B cell (primary cell): ENCODE measurements at regions of chr6 and their contacts with region 1.

Region 1: GRCh38 chr6:36678518-36679027 is at the start of gene CDKN1A:
- DNase-seq: peak; percentile 92
- ATAC-seq: peak; percentile 51
- H3K4me3 ChIP-seq: peak within 1 kb of the TSS; percentile 55 to 98 (median 71)
- H3K4me3 Mint-ChIP-seq: peak within 1 kb of the TSS; percentile 99
- H3K27ac ChIP-seq: peak within 1 kb of the TSS; percentile 97 to 100
- H3K27ac Mint-ChIP-seq: peak within 1 kb of the TSS; percentile 88
- H3K4me1 ChIP-seq: peaks cover 33 to 48% of the 10 kb centered on the region in 2 donors
- H3K4me1 Mint-ChIP-seq: peaks cover 41% of the 10 kb centered on the region
- H3K27me3 ChIP-seq: no peaks in the 10 kb centered on the region
- H3K27me3 Mint-ChIP-seq: no peaks in the 10 kb centered on the region
- CTCF ChIP-seq: no peak
- total RNA-seq, gene CDKN1A: 45.5 and 47.2 TPM in 2 replicates

Region 2: GRCh38 chr6:36196880-36197548 is 481.6 kb before region 1 on chr6:
- CTCF ChIA-PET with region 1: no interaction called
- POLR2A ChIA-PET with region 1: no interaction called
- intact Hi-C with region 1: loop called (anchors 5 kb)
- DNase-seq: peak; percentile 98
- ATAC-seq: peak; percentile 90
- H3K4me3 ChIP-seq: peak overlapping the region; percentile 17 to 84 (median 62)
- H3K4me3 Mint-ChIP-seq: peak overlapping the region; percentile 94
- H3K27ac ChIP-seq: peak overlapping the region; percentile 78 to 79
- H3K27ac Mint-ChIP-seq: peak overlapping the region; percentile 96
- H3K4me1 ChIP-seq: peaks cover 21 to 22% of the 10 kb centered on the region in 2 donors
- H3K4me1 Mint-ChIP-seq: peaks cover 36% of the 10 kb centered on the region
- H3K27me3 ChIP-seq: no peaks in the 10 kb centered on the region
- H3K27me3 Mint-ChIP-seq: no peaks in the 10 kb centered on the region
- CTCF ChIP-seq: no peak

Region 3: GRCh38 chr6:36546920-36547645 is 131.5 kb before region 1 on chr6 and contains the start of gene STK38:
- CTCF ChIA-PET with region 1: no interaction called
- POLR2A ChIA-PET with region 1: interaction called, 6 read pairs
- intact Hi-C with region 1: loop called (anchors 2 kb)
- DNase-seq: peak; percentile 95
- ATAC-seq: peak; percentile 85
- H3K4me3 ChIP-seq: peak within 1 kb of the TSS; percentile 70 to 96 (median 88)
- H3K4me3 Mint-ChIP-seq: peak within 1 kb of the TSS; percentile 94
- H3K27ac ChIP-seq: peak within 1 kb of the TSS; percentile 87 to 92
- H3K27ac Mint-ChIP-seq: peak within 1 kb of the TSS; percentile 91
- H3K4me1 ChIP-seq: peaks cover 52 to 60% of the 10 kb centered on the region in 2 donors
- H3K4me1 Mint-ChIP-seq: peaks cover 59% of the 10 kb centered on the region
- H3K27me3 ChIP-seq: no peaks in the 10 kb centered on the region
- H3K27me3 Mint-ChIP-seq: no peaks in the 10 kb centered on the region
- CTCF ChIP-seq: no peak
- total RNA-seq, gene STK38: 67.4 and 71.8 TPM in 2 replicates

Region 4: DNA sequence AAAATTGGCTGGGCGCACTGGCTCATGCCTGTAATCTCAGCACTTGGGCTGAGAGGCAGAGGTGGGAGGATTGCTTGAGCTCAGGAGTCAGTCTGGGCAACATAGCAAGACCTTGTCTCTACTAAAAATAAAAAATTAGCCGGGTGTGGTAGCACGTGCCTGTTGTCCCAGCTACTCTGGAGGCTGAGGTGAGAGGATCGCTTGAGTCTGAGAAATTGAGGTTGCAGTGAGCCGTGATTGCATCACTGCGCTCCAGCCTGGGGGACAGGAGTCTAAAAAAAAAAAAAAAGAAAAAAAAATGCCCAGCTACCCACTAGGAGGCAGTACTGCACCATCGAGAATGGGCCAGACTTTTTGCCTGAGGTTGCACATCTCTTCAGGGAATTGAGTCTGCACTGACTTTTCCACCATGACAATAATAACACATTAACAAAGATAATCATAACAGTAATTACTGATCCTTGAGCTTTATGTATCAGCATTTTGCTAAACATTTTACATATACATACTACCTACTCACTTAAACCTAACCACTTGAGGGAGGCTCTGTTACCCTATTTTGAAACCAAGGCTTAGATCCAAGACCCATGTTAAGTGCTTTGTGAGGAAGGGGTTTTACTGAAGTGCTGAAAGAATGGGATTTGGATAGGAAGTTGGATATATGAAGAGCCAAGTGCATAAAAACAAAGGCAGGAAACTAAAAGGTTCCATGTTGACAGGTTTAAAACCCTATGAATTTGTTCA is 63.4 kb before region 1 on chr6:
- CTCF ChIA-PET with region 1: interaction called, 47 read pairs
- POLR2A ChIA-PET with region 1: interaction called, 4 read pairs
- intact Hi-C with region 1: loop called (anchors 2 kb)
- DNase-seq: peak; percentile 82
- ATAC-seq: peak; percentile 81
- H3K4me3 ChIP-seq: no peak overlapping the region
- H3K4me3 Mint-ChIP-seq: no peak overlapping the region
- H3K27ac ChIP-seq: no peak overlapping the region
- H3K27ac Mint-ChIP-seq: peak overlapping the region; percentile 69
- H3K4me1 ChIP-seq: peaks cover 9 to 21% of the 10 kb centered on the region in 2 donors
- H3K4me1 Mint-ChIP-seq: peaks cover 19% of the 10 kb centered on the region
- H3K27me3 ChIP-seq: no peaks in the 10 kb centered on the region
- H3K27me3 Mint-ChIP-seq: no peaks in the 10 kb centered on the region
- CTCF ChIP-seq: peak; percentile 84

Region 5: GRCh38 chr6:36724514-36725390 is 46.2 kb after region 1 on chr6:
- CTCF ChIA-PET with region 1: interaction called, 88 read pairs
- POLR2A ChIA-PET with region 1: no interaction called
- intact Hi-C with region 1: loop called (anchors 5 kb)
- DNase-seq: peak; percentile 63
- ATAC-seq: no peak
- H3K4me3 ChIP-seq: no peak overlapping the region
- H3K4me3 Mint-ChIP-seq: peak overlapping the region; percentile 1
- H3K27ac ChIP-seq: no peak overlapping the region
- H3K27ac Mint-ChIP-seq: peak overlapping the region; percentile 26
- H3K4me1 ChIP-seq: peaks cover 51 to 53% of the 10 kb centered on the region in 2 donors
- H3K4me1 Mint-ChIP-seq: peaks cover 58% of the 10 kb centered on the region
- H3K27me3 ChIP-seq: no peaks in the 10 kb centered on the region
- H3K27me3 Mint-ChIP-seq: no peaks in the 10 kb centered on the region
- CTCF ChIP-seq: peak; percentile 21

Region 6: GRCh38 chr6:36885461-36886401 is 207.2 kb after region 1 on chr6 and contains the start of gene C6orf89:
- CTCF ChIA-PET with region 1: no interaction called
- POLR2A ChIA-PET with region 1: no interaction called
- intact Hi-C with region 1: loop called (anchors 5 kb)
- DNase-seq: peak; percentile 98
- ATAC-seq: peak; percentile 99
- H3K4me3 ChIP-seq: peak within 1 kb of the TSS; percentile 68 to 89 (median 80)
- H3K4me3 Mint-ChIP-seq: peak within 1 kb of the TSS; percentile 90
- H3K27ac ChIP-seq: peak within 1 kb of the TSS; percentile 82 to 92
- H3K27ac Mint-ChIP-seq: peak within 1 kb of the TSS; percentile 92
- H3K4me1 ChIP-seq: peaks cover 17 to 22% of the 10 kb centered on the region in 2 donors
- H3K4me1 Mint-ChIP-seq: peaks cover 32% of the 10 kb centered on the region
- H3K27me3 ChIP-seq: no peaks in the 10 kb centered on the region
- H3K27me3 Mint-ChIP-seq: no peaks in the 10 kb centered on the region
- CTCF ChIP-seq: peak; percentile 86
- total RNA-seq, gene C6orf89: 34.2 and 35.3 TPM in 2 replicates

Region 7: GRCh38 chr6:38517005-38517404 is 1838.4 kb after region 1 on chr6:
- CTCF ChIA-PET with region 1: no interaction called
- POLR2A ChIA-PET with region 1: no interaction called
- intact Hi-C with region 1: no loop called
- DNase-seq: no peak
- ATAC-seq: no peak
- H3K4me3 ChIP-seq: no peak overlapping the region
- H3K4me3 Mint-ChIP-seq: no peak overlapping the region
- H3K27ac ChIP-seq: no peak overlapping the region
- H3K27ac Mint-ChIP-seq: no peak overlapping the region
- H3K4me1 ChIP-seq: peaks cover 8 to 9% of the 10 kb centered on the region in 2 donors
- H3K4me1 Mint-ChIP-seq: peaks cover 20% of the 10 kb centered on the region
- H3K27me3 ChIP-seq: no peaks in the 10 kb centered on the region
- H3K27me3 Mint-ChIP-seq: no peaks in the 10 kb centered on the region
- CTCF ChIP-seq: no peak